MCF 10A (cell line): ENCODE measurements at regions of chr5 and their contacts with region 1.

Region 1: DNA sequence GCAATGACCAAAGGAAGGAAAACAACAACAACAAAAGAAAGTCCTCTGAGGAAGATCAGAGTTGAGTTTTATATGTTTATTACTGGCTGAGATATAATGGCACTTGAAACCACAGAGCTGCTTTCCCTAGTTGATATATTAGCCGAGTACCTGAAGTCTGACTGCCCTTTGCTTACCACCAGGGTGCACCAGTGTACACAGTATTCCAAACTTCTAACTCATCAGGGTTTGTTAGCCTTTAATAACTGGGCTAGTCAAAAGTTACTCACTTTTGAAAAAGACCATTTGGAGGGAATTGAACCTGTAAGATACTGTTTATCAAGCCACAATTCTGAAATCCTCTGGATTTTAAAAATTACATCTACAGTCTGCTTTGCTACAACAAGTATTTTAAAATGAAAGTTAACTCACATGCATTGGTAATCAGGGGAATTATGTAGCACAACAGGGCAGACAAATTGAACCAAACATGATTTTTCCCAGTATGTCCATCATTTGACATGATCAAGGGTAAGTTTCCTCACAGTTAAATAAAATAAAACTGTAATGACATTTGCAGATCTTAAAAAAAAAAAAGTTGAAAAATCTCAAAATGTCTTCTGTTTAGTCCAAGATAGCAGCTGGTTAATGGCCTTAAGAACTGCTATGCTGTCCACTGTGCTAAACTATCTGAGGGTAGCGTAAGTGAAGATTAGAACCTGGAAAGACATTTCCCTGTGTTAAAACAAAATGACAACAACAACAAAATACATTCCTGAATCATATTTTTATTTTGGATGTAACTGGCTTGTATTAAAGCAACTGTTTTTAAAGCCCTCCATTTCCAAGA is 57.3 kb upstream of the C6 start:
- DNase-seq: peak; percentile 69
- H3K4me3 Mint-ChIP-seq: no peak overlapping the region
- H3K27ac Mint-ChIP-seq: no peak overlapping the region
- H3K4me1 Mint-ChIP-seq: no peaks in the 10 kb centered on the region
- H3K27me3 Mint-ChIP-seq: peaks cover 18% of the 10 kb centered on the region
- CTCF ChIP-seq: peak; percentile 60

Region 2: DNA sequence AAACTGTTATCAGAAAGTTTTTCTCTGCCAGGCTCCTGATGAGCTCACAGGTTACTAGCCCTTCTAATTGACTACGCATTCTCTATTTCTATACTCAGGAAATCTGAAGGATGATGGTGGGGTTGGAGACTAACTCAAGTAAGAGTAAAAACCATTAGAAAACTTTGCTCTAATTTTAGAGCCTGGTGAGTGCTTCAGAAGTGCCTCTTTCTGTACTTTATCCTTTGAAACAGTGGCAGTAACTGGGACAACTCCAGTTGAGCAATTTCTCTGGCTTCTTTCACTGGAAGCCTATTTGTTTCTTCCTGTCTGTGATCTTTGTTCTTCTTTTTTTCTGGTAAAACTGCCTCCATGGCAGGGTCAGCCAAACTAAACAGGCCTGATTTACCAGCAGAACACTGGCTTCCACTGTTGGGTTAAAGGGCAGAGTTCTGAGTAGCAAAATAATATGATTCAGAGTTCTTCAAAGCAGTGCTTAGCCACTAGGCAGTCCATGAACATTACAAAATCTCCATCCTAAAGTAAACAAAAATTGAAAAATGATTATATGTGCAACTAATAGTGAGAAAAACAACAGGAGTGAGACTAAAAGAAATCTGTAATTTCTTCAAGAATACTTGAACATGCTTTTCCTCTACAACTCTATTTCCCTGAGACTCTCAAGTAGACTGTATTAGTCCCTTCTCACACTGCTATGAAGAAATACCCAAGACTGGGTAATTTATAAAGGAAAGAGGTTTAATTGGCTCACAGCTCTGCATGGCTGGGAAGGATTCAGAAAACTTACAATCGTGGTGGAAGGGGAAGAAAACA is 279.3 kb before region 1 on chr5:
- CTCF ChIA-PET with region 1: no interaction called
- POLR2A ChIA-PET with region 1: no interaction called
- intact Hi-C with region 1: no loop called
- DNase-seq: peak; percentile 83
- H3K4me3 Mint-ChIP-seq: no peak overlapping the region
- H3K27ac Mint-ChIP-seq: peak overlapping the region; percentile 16
- H3K4me1 Mint-ChIP-seq: peaks cover 14% of the 10 kb centered on the region
- H3K27me3 Mint-ChIP-seq: no peaks in the 10 kb centered on the region
- CTCF ChIP-seq: no peak

Region 3: GRCh38 chr5:41524174-41524573 is 253.5 kb after region 1 on chr5:
- CTCF ChIA-PET with region 1: interaction called, 39 read pairs
- POLR2A ChIA-PET with region 1: no interaction called
- intact Hi-C with region 1: loop called (anchors 1 kb)
- DNase-seq: peak; percentile 24
- H3K4me3 Mint-ChIP-seq: no peak overlapping the region
- H3K27ac Mint-ChIP-seq: no peak overlapping the region
- H3K4me1 Mint-ChIP-seq: peaks cover 13% of the 10 kb centered on the region
- H3K27me3 Mint-ChIP-seq: peaks cover 34% of the 10 kb centered on the region
- CTCF ChIP-seq: no peak

Region 4: GRCh38 chr5:41636605-41637004 is 366.0 kb after region 1 on chr5:
- CTCF ChIA-PET with region 1: interaction called, 18 read pairs
- POLR2A ChIA-PET with region 1: no interaction called
- intact Hi-C with region 1: loop called (anchors 1 kb)
- DNase-seq: peak; percentile 36
- H3K4me3 Mint-ChIP-seq: no peak overlapping the region
- H3K27ac Mint-ChIP-seq: no peak overlapping the region
- H3K4me1 Mint-ChIP-seq: no peaks in the 10 kb centered on the region
- H3K27me3 Mint-ChIP-seq: peaks cover 41% of the 10 kb centered on the region
- CTCF ChIP-seq: peak; percentile 24

Region 5: DNA sequence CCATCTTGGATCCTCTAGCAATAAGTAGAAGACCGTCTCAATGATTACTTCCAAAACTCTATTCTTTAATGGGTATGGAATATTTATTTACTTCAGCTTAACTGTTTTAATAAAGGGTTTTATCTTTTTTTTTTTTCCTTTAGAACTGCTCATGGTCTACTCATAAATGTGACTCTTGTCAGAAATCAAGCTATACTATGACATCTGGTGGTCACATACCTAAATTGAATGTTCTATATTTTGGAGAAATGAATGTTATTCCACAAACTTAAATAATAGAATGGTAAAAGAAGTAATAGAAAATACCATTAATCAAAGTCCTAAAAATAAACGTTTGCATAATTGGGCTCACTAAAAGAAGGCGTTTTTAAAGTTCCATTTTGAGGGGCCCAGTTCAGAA is 371.0 kb after region 1 on chr5:
- CTCF ChIA-PET with region 1: interaction called, 18 read pairs
- POLR2A ChIA-PET with region 1: no interaction called
- intact Hi-C with region 1: loop called (anchors 1 kb)
- DNase-seq: peak; percentile 9
- H3K4me3 Mint-ChIP-seq: no peak overlapping the region
- H3K27ac Mint-ChIP-seq: no peak overlapping the region
- H3K4me1 Mint-ChIP-seq: no peaks in the 10 kb centered on the region
- H3K27me3 Mint-ChIP-seq: peaks cover 11% of the 10 kb centered on the region
- CTCF ChIP-seq: no peak

Region 6: DNA sequence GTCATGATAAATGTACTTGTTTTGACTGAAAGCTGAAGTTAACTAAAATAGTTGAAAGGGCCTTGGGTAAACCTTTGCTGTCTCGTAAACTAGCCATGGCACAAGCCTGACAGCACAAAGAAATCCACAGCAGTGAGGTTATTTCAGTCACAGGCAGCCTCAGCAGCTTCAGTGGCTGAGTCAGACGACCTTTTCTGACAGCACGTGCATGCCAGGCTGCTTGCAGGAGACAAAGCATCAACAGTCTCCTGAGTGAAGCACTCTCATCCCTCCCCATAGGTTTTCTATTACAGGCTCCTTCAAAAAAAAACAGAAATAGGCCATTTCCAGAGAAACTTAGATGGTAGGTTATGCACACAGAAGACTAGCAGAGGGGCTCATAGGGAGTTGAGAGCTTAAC is 565.0 kb after region 1 on chr5:
- CTCF ChIA-PET with region 1: interaction called, 10 read pairs
- POLR2A ChIA-PET with region 1: interaction called, 3 read pairs
- intact Hi-C with region 1: no loop called
- DNase-seq: peak; percentile 70
- H3K4me3 Mint-ChIP-seq: no peak overlapping the region
- H3K27ac Mint-ChIP-seq: no peak overlapping the region
- H3K4me1 Mint-ChIP-seq: no peaks in the 10 kb centered on the region
- H3K27me3 Mint-ChIP-seq: no peaks in the 10 kb centered on the region
- CTCF ChIP-seq: no peak

Region 7: GRCh38 chr5:41935544-41935943 is 664.9 kb after region 1 on chr5:
- CTCF ChIA-PET with region 1: no interaction called
- POLR2A ChIA-PET with region 1: no interaction called
- intact Hi-C with region 1: no loop called
- DNase-seq: no peak
- H3K4me3 Mint-ChIP-seq: no peak overlapping the region
- H3K27ac Mint-ChIP-seq: no peak overlapping the region
- H3K4me1 Mint-ChIP-seq: no peaks in the 10 kb centered on the region
- H3K27me3 Mint-ChIP-seq: no peaks in the 10 kb centered on the region
- CTCF ChIP-seq: no peak